CD8-positive, alpha-beta T cell (primary cell): ENCODE measurements at regions of chr16 and their contacts with region 1.

Region 1: DNA sequence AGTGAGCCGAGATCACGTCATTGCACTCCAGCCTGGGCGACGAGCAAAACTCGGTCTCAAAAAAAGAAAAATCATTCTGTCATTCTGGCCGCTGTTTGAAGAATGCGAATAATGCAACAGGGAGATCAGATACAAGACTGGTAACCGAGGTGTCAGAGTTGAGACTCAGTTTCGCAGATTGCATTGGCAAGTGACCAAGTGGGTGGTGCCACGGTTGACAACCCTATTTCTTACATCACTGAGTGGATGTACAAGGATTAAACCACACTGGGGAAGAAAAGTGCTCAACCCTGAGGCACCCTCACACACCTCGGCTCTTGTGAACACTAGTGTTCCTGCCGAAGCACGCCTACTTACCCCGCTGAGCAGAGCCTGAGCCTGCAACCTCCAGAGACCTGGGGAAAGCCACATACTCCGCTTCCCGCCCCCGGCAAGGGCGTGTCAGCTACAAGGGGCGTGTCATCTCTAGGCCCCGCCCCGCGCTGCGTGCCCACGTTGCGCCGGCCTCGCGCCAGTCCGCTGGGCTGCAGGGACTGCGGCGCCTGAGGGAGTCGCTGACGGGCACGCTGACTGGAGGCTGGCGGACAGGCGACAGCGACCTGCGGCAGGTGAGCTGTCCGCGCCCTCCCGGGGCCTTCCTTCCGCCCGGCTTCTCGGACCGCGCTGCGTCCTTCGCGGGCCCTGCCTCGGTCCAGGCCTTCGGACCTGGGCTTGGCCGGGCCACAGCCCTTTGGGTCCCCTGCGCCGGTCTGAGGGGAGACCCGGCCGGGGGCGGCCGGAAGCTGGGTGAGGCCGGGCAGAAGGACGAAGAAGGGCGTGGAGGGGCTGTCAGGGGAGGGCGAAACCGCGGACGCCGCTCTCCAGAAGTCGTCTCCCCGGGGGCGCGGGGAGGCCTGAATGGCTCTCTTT is at the start of gene HMOX2:
- DNase-seq: peak; percentile 86 to 98 (median 93)
- ATAC-seq: peak; percentile 83
- H3K4me3 ChIP-seq: peak within 1 kb of the TSS; percentile 85 to 98
- H3K4me3 Mint-ChIP-seq: peak within 1 kb of the TSS; percentile 90
- H3K27ac ChIP-seq: peak within 1 kb of the TSS; percentile 72 to 85
- H3K27ac Mint-ChIP-seq: peak within 1 kb of the TSS; percentile 92
- H3K4me1 ChIP-seq: peaks cover 38% of the 10 kb centered on the region
- H3K4me1 Mint-ChIP-seq: peaks cover 46% of the 10 kb centered on the region
- H3K27me3 ChIP-seq: no peaks in the 10 kb centered on the region
- H3K27me3 Mint-ChIP-seq: no peaks in the 10 kb centered on the region
- CTCF ChIP-seq: no peak
- total RNA-seq, gene HMOX2: 31.7 to 36.4 TPM

Region 2: DNA sequence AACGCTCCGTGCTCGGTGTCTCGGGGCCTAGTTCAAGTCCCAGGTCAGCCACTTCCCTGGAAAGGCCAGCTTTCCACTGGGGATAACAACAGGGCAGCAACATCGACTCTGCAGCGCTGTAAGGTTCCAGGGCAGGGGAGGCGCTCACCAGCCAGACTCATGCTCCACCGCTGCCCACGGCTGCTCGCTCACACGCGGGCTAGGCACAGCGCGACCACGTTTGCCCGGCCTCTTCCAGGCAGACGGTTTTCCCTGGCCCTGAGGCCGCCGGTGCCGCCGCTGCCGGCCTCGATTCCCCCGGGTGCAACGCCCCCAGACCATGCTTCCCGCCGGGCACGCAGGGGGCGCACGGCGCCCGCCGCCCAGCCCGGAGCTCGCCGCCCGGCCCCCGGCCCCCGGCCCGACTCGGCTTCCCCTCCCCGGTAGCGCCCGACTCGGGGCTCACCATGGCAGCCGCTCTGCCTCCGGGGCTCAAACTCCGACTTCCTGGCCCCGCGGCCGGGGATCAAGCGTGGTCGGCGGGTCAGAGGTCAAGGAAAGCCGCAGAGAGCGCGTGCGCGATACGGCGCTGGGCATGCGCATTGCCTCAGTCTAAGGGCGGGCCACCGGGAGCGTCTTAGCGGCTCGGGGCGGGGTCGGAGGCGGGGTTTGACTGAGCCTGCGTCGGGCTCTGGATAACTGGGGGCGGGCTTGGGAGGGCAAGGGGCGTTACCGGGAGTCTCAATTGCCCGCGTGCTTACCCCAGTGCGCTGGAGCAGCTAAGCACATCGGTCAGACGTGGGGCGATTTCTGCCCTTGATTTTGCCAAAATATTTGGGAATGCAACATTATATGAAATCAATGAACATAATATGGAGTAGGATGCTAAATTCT is 125.1 kb before region 1 on chr16 and contains the start of gene PAM16:
- CTCF ChIA-PET with region 1: no interaction called
- POLR2A ChIA-PET with region 1: no interaction called
- intact Hi-C with region 1: loop called in 1 of 2 experiments (anchors 1 kb)
- DNase-seq: peak; percentile 93 to 99 (median 98)
- ATAC-seq: peak; percentile 89
- H3K4me3 ChIP-seq: peak within 1 kb of the TSS; percentile 92
- H3K4me3 Mint-ChIP-seq: peak within 1 kb of the TSS; percentile 93
- H3K27ac ChIP-seq: peak within 1 kb of the TSS; percentile 80 to 82
- H3K27ac Mint-ChIP-seq: peak within 1 kb of the TSS; percentile 90
- H3K4me1 ChIP-seq: peaks cover 16% of the 10 kb centered on the region
- H3K4me1 Mint-ChIP-seq: peaks cover 42% of the 10 kb centered on the region
- H3K27me3 ChIP-seq: no peaks in the 10 kb centered on the region
- H3K27me3 Mint-ChIP-seq: no peaks in the 10 kb centered on the region
- CTCF ChIP-seq: no peak
- total RNA-seq, gene PAM16: 30.9 to 31.4 TPM

Region 3: DNA sequence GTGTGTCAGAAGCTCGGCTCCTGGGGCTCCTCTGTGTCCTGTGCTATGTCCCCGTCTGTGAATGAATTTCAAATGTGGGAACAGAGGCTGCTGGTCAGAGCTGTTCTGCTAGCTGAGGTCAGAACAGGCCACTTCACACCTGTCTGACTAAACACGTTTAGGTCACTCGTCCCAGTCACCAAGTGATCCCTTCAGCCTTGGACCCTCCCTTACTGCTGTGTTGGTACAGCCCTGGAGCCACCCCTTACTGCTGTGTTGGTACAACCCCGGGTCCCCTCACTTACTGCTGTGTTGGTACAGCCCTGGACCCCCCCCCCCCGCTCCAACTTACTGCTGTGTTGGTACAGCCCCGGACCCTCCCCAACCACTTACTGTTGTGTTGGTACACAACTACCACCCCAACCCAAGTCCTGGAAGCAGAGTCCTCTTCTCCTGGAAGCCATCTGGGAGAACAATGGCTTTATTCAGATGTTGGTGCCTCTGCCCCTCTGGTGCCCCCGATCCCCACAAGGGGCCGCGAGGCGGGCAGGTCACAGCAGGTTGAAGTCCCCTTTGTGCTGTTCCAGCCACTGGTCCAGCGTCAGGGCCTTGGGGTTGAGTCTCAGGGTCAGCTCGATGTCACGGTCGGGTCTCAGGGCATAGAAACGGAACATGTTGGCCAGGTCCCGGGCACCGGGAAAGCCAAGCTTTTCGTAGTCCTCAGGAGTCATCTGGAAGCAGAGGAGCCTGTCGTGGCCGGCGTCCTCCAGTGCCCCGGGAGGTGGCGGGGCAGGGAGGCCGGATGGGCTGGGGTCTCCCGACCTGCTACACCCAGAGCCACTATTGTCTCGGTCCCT is 14.7 kb before region 1 on chr16:
- CTCF ChIA-PET with region 1: interaction called, 10 read pairs
- POLR2A ChIA-PET with region 1: interaction called, 7 read pairs
- intact Hi-C with region 1: no loop called
- DNase-seq: no peak
- ATAC-seq: no peak
- H3K4me3 ChIP-seq: no peak overlapping the region
- H3K4me3 Mint-ChIP-seq: no peak overlapping the region
- H3K27ac ChIP-seq: no peak overlapping the region
- H3K27ac Mint-ChIP-seq: no peak overlapping the region
- H3K4me1 ChIP-seq: peaks cover 24% of the 10 kb centered on the region
- H3K4me1 Mint-ChIP-seq: peaks cover 24% of the 10 kb centered on the region
- H3K27me3 ChIP-seq: no peaks in the 10 kb centered on the region
- H3K27me3 Mint-ChIP-seq: no peaks in the 10 kb centered on the region
- CTCF ChIP-seq: no peak

Region 4: DNA sequence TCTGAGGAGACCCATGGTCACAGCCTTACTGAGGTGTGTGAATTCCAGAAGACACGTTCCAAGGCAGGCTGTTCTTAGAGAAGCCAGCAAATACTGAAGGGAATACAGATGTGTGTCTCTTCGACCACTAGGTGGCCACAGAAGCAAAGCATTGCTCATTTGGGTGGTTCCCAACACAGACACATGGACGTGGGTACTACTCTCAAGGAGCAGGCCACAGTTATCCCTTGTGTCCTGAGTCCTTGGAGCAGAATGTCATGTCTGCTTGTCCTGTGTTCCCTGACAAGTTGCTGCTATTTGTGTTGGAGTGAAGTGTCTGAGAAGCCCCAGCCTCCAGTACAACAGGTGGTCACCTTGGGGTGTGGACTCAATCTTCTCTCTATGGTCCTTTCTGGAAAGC is 30.3 kb after region 1 on chr16:
- CTCF ChIA-PET with region 1: interaction called, 73 read pairs
- POLR2A ChIA-PET with region 1: interaction called, 75 read pairs
- intact Hi-C with region 1: loop called (anchors 1 kb)
- DNase-seq: peak; percentile 28 to 88 (median 60)
- ATAC-seq: peak; percentile 34
- H3K4me3 ChIP-seq: no peak overlapping the region
- H3K4me3 Mint-ChIP-seq: peak overlapping the region; percentile 65
- H3K27ac ChIP-seq: peak overlapping the region; percentile 85 to 88
- H3K27ac Mint-ChIP-seq: peak overlapping the region; percentile 98
- H3K4me1 ChIP-seq: peaks cover 58% of the 10 kb centered on the region
- H3K4me1 Mint-ChIP-seq: peaks cover 59% of the 10 kb centered on the region
- H3K27me3 ChIP-seq: no peaks in the 10 kb centered on the region
- H3K27me3 Mint-ChIP-seq: no peaks in the 10 kb centered on the region
- CTCF ChIP-seq: peak; percentile 88

Region 5: GRCh38 chr16:4574919-4575705 is 99.0 kb after region 1 on chr16:
- CTCF ChIA-PET with region 1: no interaction called
- POLR2A ChIA-PET with region 1: no interaction called
- intact Hi-C with region 1: no loop called
- DNase-seq: peak in 1 of 9 experiments; percentile 23
- ATAC-seq: no peak
- H3K4me3 ChIP-seq: no peak overlapping the region
- H3K4me3 Mint-ChIP-seq: no peak overlapping the region
- H3K27ac ChIP-seq: no peak overlapping the region
- H3K27ac Mint-ChIP-seq: no peak overlapping the region
- H3K4me1 ChIP-seq: peaks cover 9% of the 10 kb centered on the region
- H3K4me1 Mint-ChIP-seq: peaks cover 2% of the 10 kb centered on the region
- H3K27me3 ChIP-seq: no peaks in the 10 kb centered on the region
- H3K27me3 Mint-ChIP-seq: no peaks in the 10 kb centered on the region
- CTCF ChIP-seq: no peak

Region 6: DNA sequence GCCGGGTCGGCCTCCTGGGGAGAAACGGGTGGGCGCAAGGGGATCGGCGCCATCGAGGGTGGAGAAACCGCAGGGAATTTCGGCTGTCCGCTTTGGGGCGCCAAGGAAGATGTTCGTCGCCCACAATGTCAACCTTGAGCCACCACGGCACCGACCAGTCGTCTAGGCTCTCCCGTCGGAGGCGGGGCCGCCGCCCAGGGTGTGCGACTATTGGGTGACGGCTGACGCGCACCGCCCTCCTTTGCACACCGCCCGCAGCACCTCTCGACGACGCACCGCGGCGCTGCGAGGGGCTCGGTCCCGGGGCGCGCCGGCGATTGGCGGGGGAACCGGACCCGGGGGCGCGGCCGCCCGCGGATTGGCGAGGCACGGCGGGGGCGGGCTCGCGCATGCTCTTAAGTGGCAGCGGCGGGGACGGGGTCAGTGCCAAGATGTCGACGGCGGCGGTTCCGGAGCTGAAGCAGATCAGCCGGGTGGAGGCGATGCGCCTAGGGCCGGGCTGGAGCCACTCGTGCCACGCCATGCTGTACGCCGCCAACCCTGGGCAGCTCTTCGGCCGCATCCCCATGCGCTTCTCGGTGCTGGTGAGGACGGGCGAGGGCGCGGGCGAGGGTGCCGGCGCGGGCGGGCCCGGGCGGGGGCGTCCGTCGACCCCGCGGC is 217.3 kb after region 1 on chr16 and contains the start of gene NUDT16L1:
- CTCF ChIA-PET with region 1: no interaction called
- POLR2A ChIA-PET with region 1: no interaction called
- intact Hi-C with region 1: loop called in 1 of 2 experiments (anchors 5 kb)
- DNase-seq: peak; percentile 94 to 99 (median 97)
- ATAC-seq: peak; percentile 90
- H3K4me3 ChIP-seq: peak within 1 kb of the TSS; percentile 85 to 97
- H3K4me3 Mint-ChIP-seq: peak within 1 kb of the TSS; percentile 88
- H3K27ac ChIP-seq: peak within 1 kb of the TSS; percentile 68 to 93
- H3K27ac Mint-ChIP-seq: peak within 1 kb of the TSS; percentile 89
- H3K4me1 ChIP-seq: peaks cover 30% of the 10 kb centered on the region
- H3K4me1 Mint-ChIP-seq: peaks cover 13% of the 10 kb centered on the region
- H3K27me3 ChIP-seq: no peaks in the 10 kb centered on the region
- H3K27me3 Mint-ChIP-seq: no peaks in the 10 kb centered on the region
- CTCF ChIP-seq: no peak
- total RNA-seq, gene NUDT16L1: 72.9 to 76.5 TPM